ENCODE measurements at regions of chr11 and their contacts with region 1.

Region 1: GRCh38 chr11:17770048-17770652 is 35.6 kb downstream of the KCNC1 start:
- DNase-seq: peak; percentile 91
- ATAC-seq: peak; percentile 86
- H3K4me3 ChIP-seq: peak overlapping the region in 2 of 3 experiments; percentile 33 to 47; a peak in 3 of 6 replicates
- H3K27ac ChIP-seq: peak overlapping the region; percentile 48
- H3K4me1 ChIP-seq: peaks cover 46% of the 10 kb centered on the region
- H3K27me3 ChIP-seq: peaks cover 0 to 4% of the 10 kb centered on the region in 2 experiments; a peak in 2 of 5 replicates
- CTCF ChIP-seq: peak; percentile 91
- EP300 ChIP-seq: peak; percentile 87 to 93; a peak in 3 of 4 replicates
- POLR2A ChIP-seq: 0 out of 4 replicates have a peak, but pooled peaks of 1 of the 2 experiments have one; percentile 30
- RAD21 ChIP-seq: peak; percentile 50; the same call in 1 of the 2 replicates

Region 2: GRCh38 chr11:17519061-17519885 is 250.9 kb before region 1 on chr11:
- CTCF ChIA-PET with region 1: no interaction called
- POLR2A ChIA-PET with region 1: no interaction called
- in situ Hi-C with region 1: no loop called
- intact Hi-C with region 1: no loop called
- DNase-seq: no peak
- ATAC-seq: no peak
- H3K4me3 ChIP-seq: no peak overlapping the region
- H3K27ac ChIP-seq: no peak overlapping the region
- H3K4me1 ChIP-seq: no peaks in the 10 kb centered on the region
- H3K27me3 ChIP-seq: peaks cover 0 to 5% of the 10 kb centered on the region in 2 experiments; a peak in 1 of 5 replicates
- CTCF ChIP-seq: no peak
- EP300 ChIP-seq: no peak
- POLR2A ChIP-seq: no peak
- RAD21 ChIP-seq: no peak

Region 3: GRCh38 chr11:17598700-17599459 is 171.3 kb before region 1 on chr11:
- CTCF ChIA-PET with region 1: no interaction called
- POLR2A ChIA-PET with region 1: no interaction called
- in situ Hi-C with region 1: no loop called
- intact Hi-C with region 1: no loop called
- DNase-seq: peak; percentile 37
- ATAC-seq: peak; percentile 94
- H3K4me3 ChIP-seq: no peak overlapping the region
- H3K27ac ChIP-seq: no peak overlapping the region
- H3K4me1 ChIP-seq: no peaks in the 10 kb centered on the region
- H3K27me3 ChIP-seq: peaks cover 3 to 18% of the 10 kb centered on the region in 2 experiments; a peak in 2 of 5 replicates
- CTCF ChIP-seq: peak; percentile 95
- EP300 ChIP-seq: no peak
- POLR2A ChIP-seq: no peak
- RAD21 ChIP-seq: peak; percentile 84

Region 4: DNA sequence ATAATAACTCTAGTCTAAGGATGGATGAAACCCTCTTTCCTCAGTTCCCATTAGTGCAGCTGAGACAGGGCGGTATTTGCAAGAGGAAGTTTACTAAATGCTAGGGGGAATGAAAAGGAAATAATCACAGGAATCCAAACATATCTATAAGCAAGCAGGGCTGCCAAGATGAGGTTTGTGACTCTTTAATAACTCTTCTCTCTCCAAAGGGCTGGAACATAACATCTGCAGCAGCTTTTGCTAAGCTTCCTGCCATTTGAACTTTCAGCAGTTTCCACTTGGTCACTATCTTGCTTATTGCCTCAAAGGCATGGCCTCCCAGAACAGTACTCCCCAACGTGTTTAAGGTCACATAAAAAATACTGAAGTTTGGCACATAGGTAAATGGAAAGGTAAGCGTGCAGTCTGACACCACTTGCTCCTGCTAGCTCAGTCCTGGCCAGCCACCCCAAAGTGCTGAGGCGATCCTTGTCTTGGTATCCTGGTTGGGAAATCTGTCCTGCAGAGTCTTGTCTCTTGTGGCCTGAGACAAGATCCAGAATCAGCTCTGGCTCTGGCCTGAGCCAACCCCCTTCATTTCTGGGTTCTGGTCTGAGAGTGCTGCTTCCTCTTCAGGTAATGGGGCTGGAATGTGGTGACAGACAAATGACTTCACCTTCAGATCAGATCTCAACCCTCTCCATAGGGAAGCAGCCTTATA is 46.2 kb after region 1 on chr11:
- CTCF ChIA-PET with region 1: no interaction called
- POLR2A ChIA-PET with region 1: no interaction called
- in situ Hi-C with region 1: no loop called
- intact Hi-C with region 1: loop called (anchors 5 kb)
- DNase-seq: no peak
- ATAC-seq: no peak
- H3K4me3 ChIP-seq: no peak overlapping the region
- H3K27ac ChIP-seq: no peak overlapping the region
- H3K4me1 ChIP-seq: no peaks in the 10 kb centered on the region
- H3K27me3 ChIP-seq: no peaks in the 10 kb centered on the region
- CTCF ChIP-seq: no peak
- EP300 ChIP-seq: no peak
- POLR2A ChIP-seq: no peak
- RAD21 ChIP-seq: no peak

Measured in HepG2 (cell line).